PC-9 (cell line): ENCODE measurements at regions of chr4 and their contacts with region 1.

Region 1: DNA sequence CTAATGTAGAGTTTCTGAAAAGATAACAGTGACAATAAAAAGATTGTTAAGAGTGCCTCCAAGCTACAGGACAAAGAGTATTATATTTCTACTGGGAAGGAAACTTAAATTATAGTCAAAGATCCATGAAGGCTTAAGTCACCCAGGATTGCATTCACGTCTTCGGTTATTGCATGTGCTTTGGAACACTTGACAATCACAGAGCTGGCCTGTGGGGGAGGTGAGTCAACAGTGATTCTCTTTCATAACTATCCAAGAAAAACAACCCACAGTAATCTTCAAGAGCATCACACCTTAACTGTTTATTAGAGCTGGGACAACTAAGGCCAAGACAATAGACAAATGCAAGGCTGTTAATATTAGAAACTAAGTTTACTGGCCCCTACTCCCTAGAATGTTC is 40.3 kb downstream of the PDGFC start:
- DNase-seq: peak; percentile 62 to 73
- H3K4me3 ChIP-seq: no peak overlapping the region
- H3K27ac ChIP-seq: peak overlapping the region; percentile 78
- H3K4me1 ChIP-seq: peaks cover 16% of the 10 kb centered on the region
- H3K27me3 ChIP-seq: no peaks in the 10 kb centered on the region
- CTCF ChIP-seq: no peak

Region 2: GRCh38 chr4:156949373-156949814 is 18.1 kb after region 1 on chr4:
- CTCF ChIA-PET with region 1: no interaction called
- POLR2A ChIA-PET with region 1: no interaction called
- intact Hi-C with region 1: loop called (anchors 2 kb)
- DNase-seq: peak in 1 of 2 experiments; percentile 71
- H3K4me3 ChIP-seq: no peak overlapping the region
- H3K27ac ChIP-seq: peak overlapping the region; percentile 65
- H3K4me1 ChIP-seq: peaks cover 14% of the 10 kb centered on the region; the same call in 1 of the 2 replicates
- H3K27me3 ChIP-seq: no peaks in the 10 kb centered on the region
- CTCF ChIP-seq: no peak